ENCODE measurements at regions of chr22 and their contacts with region 1.

Region 1: GRCh38 chr22:28808716-28809355 is 8.5 kb upstream of the XBP1 start:
- DNase-seq: no peak
- ATAC-seq: no peak

Region 2: GRCh38 chr22:30015846-30016245 is 1207.0 kb after region 1 on chr22:
- intact Hi-C with region 1: loop called (anchors 5 kb)
- DNase-seq: no peak
- ATAC-seq: no peak